ENCODE measurements at regions of chr9 and their contacts with region 1.

Region 1: DNA sequence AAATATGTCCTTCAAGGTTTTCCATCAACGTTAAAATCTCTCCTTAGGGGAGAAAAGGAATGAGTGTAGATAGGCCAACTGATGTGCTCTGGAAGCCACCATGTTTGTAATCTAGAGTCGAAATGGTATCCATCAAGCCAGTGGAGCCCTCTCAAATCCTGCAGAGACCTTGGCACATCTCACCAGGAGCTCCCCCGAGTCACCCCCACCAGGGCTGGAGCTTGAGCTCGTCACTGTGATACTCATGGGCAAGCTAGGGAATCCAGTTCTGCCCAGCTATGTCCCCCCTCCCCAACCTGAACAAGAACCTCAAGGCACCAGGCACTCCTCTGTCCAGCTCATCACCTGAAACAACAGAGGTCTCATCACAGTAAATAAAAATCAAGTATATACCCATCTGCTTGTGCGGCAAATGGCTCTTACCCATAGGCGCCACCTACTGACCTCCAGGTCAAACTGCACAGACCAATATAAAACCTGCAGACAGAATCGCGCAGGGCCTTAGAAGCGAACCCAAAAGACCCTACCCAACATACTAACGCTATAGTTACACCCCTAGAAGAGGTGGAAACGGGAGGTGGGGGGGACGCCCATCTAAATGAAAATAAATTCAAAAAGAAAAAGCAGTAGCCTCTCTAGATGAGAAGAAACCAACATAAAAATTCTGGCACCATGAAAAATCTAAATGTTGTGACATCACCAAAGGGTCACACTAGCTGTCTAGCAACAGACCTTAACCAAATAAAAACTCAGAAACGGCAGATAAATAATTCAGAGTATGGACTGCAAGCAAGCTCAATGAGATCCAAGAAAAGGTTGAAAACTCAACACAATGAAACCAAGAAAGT is 75.0 kb downstream of the TTC39B start:
- DNase-seq: peak in 1 of 2 experiments; percentile 51
- H3K4me3 ChIP-seq: no peak overlapping the region
- H3K27ac ChIP-seq: no peak overlapping the region
- H3K4me1 ChIP-seq: peaks cover 0 to 2% (median 0%) of the 10 kb centered on the region in 4 experiments; a peak in 1 of 7 replicates
- H3K27me3 ChIP-seq: no peaks in the 10 kb centered on the region
- CTCF ChIP-seq: peak; percentile 68 to 79 (median 73)
- EP300 ChIP-seq: no peak
- POLR2A ChIP-seq: no peak
- RAD21 ChIP-seq: peak; percentile 56 to 72

Region 2: DNA sequence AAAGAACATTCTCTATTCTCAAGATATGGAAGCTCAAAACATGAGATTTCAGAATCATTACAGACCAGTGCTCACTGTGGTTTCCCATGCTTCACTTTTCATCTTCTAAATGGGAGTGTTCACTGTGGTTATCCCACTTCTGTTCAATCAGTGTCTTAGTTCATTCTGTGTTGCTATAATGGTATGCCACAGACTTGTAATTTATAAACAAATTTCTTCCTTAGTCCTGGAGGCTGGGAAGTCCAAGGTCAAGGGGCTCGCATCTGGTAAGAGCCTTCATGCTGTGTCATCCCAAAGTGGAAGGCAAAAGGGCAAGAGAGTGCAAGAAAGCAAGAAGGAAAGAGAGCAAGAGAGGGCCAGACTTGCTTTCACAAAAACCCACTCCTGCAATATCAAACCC is 71.3 kb before region 1 on chr9:
- CTCF ChIA-PET with region 1: no interaction called
- POLR2A ChIA-PET with region 1: no interaction called
- DNase-seq: no peak
- H3K4me3 ChIP-seq: no peak overlapping the region
- H3K27ac ChIP-seq: no peak overlapping the region
- H3K4me1 ChIP-seq: 0 out of 7 replicates have a peak, but pooled peaks cover 0 to 2% (median 0%) of the 10 kb centered on the region in 4 experiments
- H3K27me3 ChIP-seq: no peaks in the 10 kb centered on the region
- CTCF ChIP-seq: no peak
- EP300 ChIP-seq: no peak
- POLR2A ChIP-seq: no peak
- RAD21 ChIP-seq: no peak

Region 3: DNA sequence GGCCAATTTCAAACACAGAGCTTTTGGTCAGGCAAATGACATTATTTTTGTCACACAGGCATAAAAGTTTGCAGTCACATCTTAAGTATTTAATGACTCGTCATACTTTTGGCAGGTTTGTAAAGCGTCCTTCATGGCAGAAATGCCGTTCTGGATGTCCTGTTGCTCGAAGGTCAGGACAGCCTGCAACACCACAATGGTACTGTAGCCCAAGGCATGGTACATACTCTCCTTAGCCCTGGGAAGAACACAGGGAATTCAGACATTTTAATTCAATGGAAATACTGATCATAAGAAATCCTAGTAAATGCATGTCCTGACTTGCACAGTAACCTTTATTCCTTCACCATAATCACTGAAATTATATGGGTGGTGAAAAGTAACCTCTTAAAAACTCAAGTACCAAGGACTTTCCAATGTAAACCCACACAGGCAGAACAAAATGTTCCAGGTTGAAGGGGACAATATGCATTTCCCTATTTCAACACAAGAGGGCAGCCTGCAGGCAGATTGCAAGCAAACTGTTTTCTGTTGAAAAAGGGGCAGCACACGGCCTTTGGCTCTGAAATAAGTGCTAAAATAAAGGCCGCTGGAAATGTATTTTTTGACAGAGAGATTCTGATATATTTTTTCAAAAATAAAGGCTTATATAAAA is 20.7 kb before region 1 on chr9:
- CTCF ChIA-PET with region 1: interaction called, 65 read pairs
- POLR2A ChIA-PET with region 1: no interaction called
- DNase-seq: peak; percentile 34 to 74
- H3K4me3 ChIP-seq: no peak overlapping the region
- H3K27ac ChIP-seq: no peak overlapping the region
- H3K4me1 ChIP-seq: peaks cover 0 to 3% (median 0%) of the 10 kb centered on the region in 4 experiments; a peak in 1 of 7 replicates
- H3K27me3 ChIP-seq: no peaks in the 10 kb centered on the region
- CTCF ChIP-seq: peak; percentile 13 to 87 (median 83)
- EP300 ChIP-seq: no peak
- POLR2A ChIP-seq: no peak
- RAD21 ChIP-seq: peak; percentile 82 to 83

Region 4: DNA sequence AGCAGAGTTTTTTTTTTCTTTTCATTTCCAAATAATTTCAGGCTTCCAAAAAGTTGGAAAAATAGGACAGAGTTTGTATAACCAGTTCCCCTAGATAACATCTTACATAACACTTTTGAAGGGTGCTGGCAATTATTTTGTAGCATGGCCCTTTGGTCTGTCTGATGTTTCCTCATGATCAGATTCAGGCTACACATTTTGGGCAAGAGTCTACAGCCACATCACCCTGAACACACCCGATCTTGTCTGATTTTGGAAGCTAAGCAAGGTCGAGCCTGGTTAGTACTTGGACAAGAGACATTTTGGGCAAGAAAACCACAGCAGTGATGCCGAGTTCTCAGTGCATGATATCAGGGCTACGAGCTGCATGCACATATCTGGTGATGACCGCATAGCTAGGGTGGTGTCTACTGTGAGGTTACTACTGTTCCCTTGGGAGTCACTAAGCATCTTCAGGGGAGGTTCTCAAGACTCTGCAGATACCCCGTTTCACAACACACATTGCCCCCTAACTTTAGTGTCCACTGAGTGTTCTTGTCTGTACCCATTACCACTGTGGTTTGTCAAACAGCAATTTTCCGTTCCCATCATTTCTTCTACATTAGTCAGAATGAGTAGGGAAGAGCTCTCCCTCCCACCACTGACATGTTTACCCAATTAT is 11.2 kb before region 1 on chr9:
- CTCF ChIA-PET with region 1: interaction called, 65 read pairs
- POLR2A ChIA-PET with region 1: no interaction called
- DNase-seq: no peak
- H3K4me3 ChIP-seq: no peak overlapping the region
- H3K27ac ChIP-seq: no peak overlapping the region
- H3K4me1 ChIP-seq: no peaks in the 10 kb centered on the region
- H3K27me3 ChIP-seq: no peaks in the 10 kb centered on the region
- CTCF ChIP-seq: no peak
- EP300 ChIP-seq: no peak
- POLR2A ChIP-seq: no peak
- RAD21 ChIP-seq: no peak

Region 5: DNA sequence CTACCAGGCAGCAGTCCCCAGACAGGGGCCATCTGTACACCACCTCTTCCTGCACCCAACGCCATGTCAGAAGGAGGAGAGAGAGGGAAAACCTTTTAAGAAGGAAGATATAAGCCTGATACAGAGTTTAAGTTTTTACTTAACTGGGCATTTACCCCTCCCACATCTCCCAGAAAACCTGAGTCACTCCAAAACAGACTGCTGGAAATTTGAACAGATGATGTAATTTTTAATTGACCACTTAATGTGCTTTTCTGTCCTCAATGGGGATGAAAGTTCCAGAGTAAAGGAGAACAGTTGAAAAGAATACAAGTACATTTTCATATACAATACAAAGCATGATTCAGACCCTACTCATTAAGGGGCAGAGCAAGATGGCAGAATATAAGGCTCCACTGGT is 11.1 kb after region 1 on chr9:
- CTCF ChIA-PET with region 1: interaction called, 23 read pairs
- POLR2A ChIA-PET with region 1: no interaction called
- DNase-seq: no peak
- H3K4me3 ChIP-seq: no peak overlapping the region
- H3K27ac ChIP-seq: no peak overlapping the region
- H3K4me1 ChIP-seq: peaks cover 0 to 8% (median 3%) of the 10 kb centered on the region in 4 experiments; a peak in 3 of 7 replicates
- H3K27me3 ChIP-seq: no peaks in the 10 kb centered on the region
- CTCF ChIP-seq: no peak
- EP300 ChIP-seq: no peak
- POLR2A ChIP-seq: no peak
- RAD21 ChIP-seq: no peak

Region 6: GRCh38 chr9:15249042-15249818 is 17.2 kb after region 1 on chr9:
- CTCF ChIA-PET with region 1: interaction called, 11 read pairs
- POLR2A ChIA-PET with region 1: no interaction called
- DNase-seq: no peak
- H3K4me3 ChIP-seq: no peak overlapping the region; a peak in 1 of 8 replicates
- H3K27ac ChIP-seq: no peak overlapping the region
- H3K4me1 ChIP-seq: peaks cover 2 to 8% (median 5%) of the 10 kb centered on the region in 4 experiments; a peak in 5 of 7 replicates
- H3K27me3 ChIP-seq: no peaks in the 10 kb centered on the region
- CTCF ChIP-seq: no peak
- EP300 ChIP-seq: no peak
- POLR2A ChIP-seq: no peak
- RAD21 ChIP-seq: no peak

Region 7: GRCh38 chr9:15381491-15381890 is 149.5 kb after region 1 on chr9:
- CTCF ChIA-PET with region 1: no interaction called
- POLR2A ChIA-PET with region 1: no interaction called
- DNase-seq: no peak
- H3K4me3 ChIP-seq: no peak overlapping the region
- H3K27ac ChIP-seq: no peak overlapping the region
- H3K4me1 ChIP-seq: no peaks in the 10 kb centered on the region; a peak in 1 of 7 replicates
- H3K27me3 ChIP-seq: no peaks in the 10 kb centered on the region
- CTCF ChIP-seq: no peak
- EP300 ChIP-seq: no peak
- POLR2A ChIP-seq: no peak
- RAD21 ChIP-seq: no peak

Region 8: GRCh38 chr9:15392363-15392762 is 160.4 kb after region 1 on chr9:
- CTCF ChIA-PET with region 1: no interaction called
- POLR2A ChIA-PET with region 1: no interaction called
- DNase-seq: no peak
- H3K4me3 ChIP-seq: no peak overlapping the region
- H3K27ac ChIP-seq: no peak overlapping the region
- H3K4me1 ChIP-seq: no peaks in the 10 kb centered on the region
- H3K27me3 ChIP-seq: no peaks in the 10 kb centered on the region
- CTCF ChIP-seq: no peak
- EP300 ChIP-seq: no peak
- POLR2A ChIP-seq: no peak
- RAD21 ChIP-seq: no peak